OCI-LY7 (cell line): ENCODE measurements at regions of chr4 and their contacts with region 1.

Region 1: GRCh38 chr4:139099366-139099982 is 77.5 kb downstream of the ELF2 start:
- DNase-seq: peak; percentile 90
- H3K4me3 ChIP-seq: no peak overlapping the region
- H3K27ac ChIP-seq: no peak overlapping the region
- H3K4me1 ChIP-seq: peaks cover 4% of the 10 kb centered on the region
- CTCF ChIP-seq: peak; percentile 97

Region 2: DNA sequence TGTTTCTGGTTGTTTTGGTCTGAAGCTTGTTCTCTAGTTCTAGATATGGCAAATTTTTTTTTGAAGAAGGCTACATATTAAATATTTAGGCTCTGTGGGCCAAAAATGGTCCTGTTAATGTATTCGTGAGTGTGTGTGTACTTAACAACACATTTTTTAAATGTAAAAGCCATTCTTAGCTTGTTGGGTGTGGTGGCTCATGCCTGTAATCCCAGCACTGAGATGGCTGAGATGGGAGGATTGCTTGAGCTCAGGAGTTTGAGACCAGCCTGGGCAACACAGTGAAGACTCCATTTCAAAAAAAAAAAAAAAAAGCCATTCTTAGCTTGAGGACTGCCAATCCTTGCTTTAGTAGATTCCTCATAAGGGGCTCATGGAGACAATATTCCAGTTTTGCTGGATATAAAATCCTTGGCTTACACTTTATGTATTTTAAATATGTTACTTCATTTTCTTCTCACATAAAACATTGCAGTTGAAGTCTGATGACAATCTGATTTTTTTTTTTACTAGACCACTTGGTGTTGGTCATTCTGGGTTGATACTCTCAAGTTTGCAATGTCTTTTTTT is 60.5 kb before region 1 on chr4:
- CTCF ChIA-PET with region 1: no interaction called
- POLR2A ChIA-PET with region 1: no interaction called
- intact Hi-C with region 1: no loop called
- DNase-seq: no peak
- H3K4me3 ChIP-seq: no peak overlapping the region
- H3K27ac ChIP-seq: no peak overlapping the region
- H3K4me1 ChIP-seq: peaks cover 16% of the 10 kb centered on the region
- CTCF ChIP-seq: no peak

Region 3: GRCh38 chr4:139167774-139168444 is 68.4 kb after region 1 on chr4:
- CTCF ChIA-PET with region 1: no interaction called
- POLR2A ChIA-PET with region 1: interaction called, 4 read pairs
- intact Hi-C with region 1: loop called (anchors 2 kb)
- DNase-seq: peak; percentile 55
- H3K4me3 ChIP-seq: no peak overlapping the region
- H3K27ac ChIP-seq: no peak overlapping the region
- H3K4me1 ChIP-seq: peaks cover 31% of the 10 kb centered on the region
- CTCF ChIP-seq: peak; percentile 82

Region 4: DNA sequence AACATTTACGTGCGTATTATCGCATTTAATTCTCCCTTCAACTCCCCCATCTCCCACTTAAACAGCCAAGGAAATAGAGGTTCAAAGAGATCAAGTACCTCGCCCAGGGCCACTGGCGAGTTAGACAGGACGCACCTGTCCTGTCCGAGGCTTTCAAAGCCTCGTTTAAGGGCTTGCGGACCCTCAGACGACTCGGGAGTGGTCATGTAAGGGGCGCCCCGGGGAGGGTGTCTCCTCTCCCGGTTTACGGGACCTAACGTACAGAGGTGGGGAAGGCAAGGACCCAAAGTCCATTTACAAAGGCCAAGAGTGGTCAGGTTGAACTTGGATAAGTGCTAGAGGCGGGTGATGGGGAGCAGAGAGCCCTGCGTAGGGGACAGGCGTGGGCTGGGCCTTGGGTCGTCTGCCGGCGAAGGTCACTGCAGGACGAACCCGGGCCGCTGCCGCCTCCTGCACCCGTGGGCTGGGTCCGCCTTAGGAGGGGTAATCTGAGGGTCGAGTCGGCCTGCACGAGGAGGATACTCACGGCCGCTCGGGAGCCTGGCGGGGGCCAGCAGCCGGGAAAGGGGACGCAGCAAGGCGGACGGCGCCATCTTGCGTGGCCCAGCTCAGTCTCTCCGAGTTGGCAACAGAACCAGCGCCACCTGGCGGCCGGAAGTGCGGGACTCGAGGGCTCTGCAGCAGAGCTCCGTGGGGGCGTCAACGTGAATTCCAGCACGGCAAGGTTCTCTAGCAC is 195.9 kb after region 1 on chr4:
- CTCF ChIA-PET with region 1: interaction called, 4 read pairs
- POLR2A ChIA-PET with region 1: interaction called, 7 read pairs
- intact Hi-C with region 1: loop called (anchors 1 kb)
- DNase-seq: peak; percentile 97
- H3K4me3 ChIP-seq: peak overlapping the region; percentile 86
- H3K27ac ChIP-seq: peak overlapping the region; percentile 65
- H3K4me1 ChIP-seq: peaks cover 32% of the 10 kb centered on the region
- CTCF ChIP-seq: peak; percentile 95